Activated CD4-positive, alpha-beta T cell treated with anti-CD3 and anti-CD28 coated beads for 36 hours (primary cell): ENCODE measurements at regions of chr11 and their contacts with region 1.

Region 1: GRCh38 chr11:16028419-16028818 is 327.9 kb downstream of the SOX6 start:
- DNase-seq: no peak
- ATAC-seq: no peak
- H3K4me3 Mint-ChIP-seq: no peak overlapping the region
- H3K27ac Mint-ChIP-seq: no peak overlapping the region
- H3K4me1 Mint-ChIP-seq: no peaks in the 10 kb centered on the region
- H3K27me3 Mint-ChIP-seq: peaks cover 2% of the 10 kb centered on the region

Region 2: DNA sequence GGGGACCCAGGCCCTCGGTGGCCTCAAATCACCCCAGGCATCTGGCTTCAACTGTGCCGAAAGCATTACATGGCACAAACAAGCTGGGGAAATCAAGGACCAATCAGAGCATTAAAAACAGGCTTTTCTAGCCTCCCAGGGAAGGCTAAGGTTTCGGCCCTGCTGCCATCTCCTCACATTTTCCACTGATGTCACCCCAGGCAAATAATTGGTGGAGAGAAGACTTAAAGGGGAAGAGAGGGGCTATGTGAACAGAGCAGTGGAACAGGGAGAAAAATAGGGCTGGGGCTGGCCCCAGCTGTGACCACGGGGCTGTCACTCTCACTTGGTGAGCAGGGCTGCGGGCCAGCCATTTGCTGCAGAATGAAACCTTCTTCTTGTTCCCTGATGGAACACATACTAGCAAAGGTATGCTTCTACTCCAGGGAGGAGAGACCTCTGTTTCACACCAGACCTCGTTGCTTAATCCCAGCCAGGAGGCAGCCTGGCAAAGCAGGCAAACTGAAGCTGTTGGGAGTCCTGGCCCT is 253.3 kb before region 1 on chr11:
- CTCF ChIA-PET with region 1: no interaction called
- POLR2A ChIA-PET with region 1: no interaction called
- intact Hi-C with region 1: no loop called
- DNase-seq: no peak
- ATAC-seq: no peak
- H3K4me3 Mint-ChIP-seq: no peak overlapping the region
- H3K27ac Mint-ChIP-seq: no peak overlapping the region
- H3K4me1 Mint-ChIP-seq: no peaks in the 10 kb centered on the region
- H3K27me3 Mint-ChIP-seq: no peaks in the 10 kb centered on the region

Region 3: DNA sequence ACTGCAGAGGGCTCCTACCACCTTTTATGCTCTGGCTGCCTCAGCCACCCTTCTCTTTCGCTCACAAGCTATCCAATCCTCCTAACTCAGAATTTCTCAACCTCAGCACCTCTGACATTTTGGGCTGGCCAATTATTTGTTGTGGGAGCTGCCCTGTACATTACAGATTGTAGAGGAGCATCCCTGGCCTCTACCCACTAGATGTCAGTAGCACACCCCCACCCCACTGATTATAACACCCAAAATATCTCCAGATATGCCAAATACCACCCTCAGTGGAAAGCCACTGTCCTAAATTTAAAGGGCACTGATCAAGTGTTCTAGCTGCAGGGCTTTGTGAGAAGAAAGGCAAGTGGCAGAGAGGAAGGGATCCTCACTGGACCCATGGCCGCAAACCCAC is 115.2 kb before region 1 on chr11:
- CTCF ChIA-PET with region 1: no interaction called
- POLR2A ChIA-PET with region 1: interaction called, 12 read pairs
- intact Hi-C with region 1: no loop called
- DNase-seq: no peak
- ATAC-seq: no peak
- H3K4me3 Mint-ChIP-seq: no peak overlapping the region
- H3K27ac Mint-ChIP-seq: no peak overlapping the region
- H3K4me1 Mint-ChIP-seq: no peaks in the 10 kb centered on the region
- H3K27me3 Mint-ChIP-seq: no peaks in the 10 kb centered on the region